ENCODE measurements at regions of chr18 and their contacts with region 1.

Region 1: GRCh38 chr18:47756364-47757016 is 174.0 kb downstream of the SMAD2 start:
- DNase-seq: peak; percentile 34 to 93
- H3K4me3 ChIP-seq: no peak overlapping the region
- H3K27ac ChIP-seq: no peak overlapping the region
- H3K4me1 ChIP-seq: no peaks in the 10 kb centered on the region
- H3K27me3 ChIP-seq: no peaks in the 10 kb centered on the region
- CTCF ChIP-seq: peak; percentile 93 to 96 (median 96)
- EP300 ChIP-seq: no peak
- POLR2A ChIP-seq: no peak
- RAD21 ChIP-seq: peak; percentile 89 to 95

Region 2: DNA sequence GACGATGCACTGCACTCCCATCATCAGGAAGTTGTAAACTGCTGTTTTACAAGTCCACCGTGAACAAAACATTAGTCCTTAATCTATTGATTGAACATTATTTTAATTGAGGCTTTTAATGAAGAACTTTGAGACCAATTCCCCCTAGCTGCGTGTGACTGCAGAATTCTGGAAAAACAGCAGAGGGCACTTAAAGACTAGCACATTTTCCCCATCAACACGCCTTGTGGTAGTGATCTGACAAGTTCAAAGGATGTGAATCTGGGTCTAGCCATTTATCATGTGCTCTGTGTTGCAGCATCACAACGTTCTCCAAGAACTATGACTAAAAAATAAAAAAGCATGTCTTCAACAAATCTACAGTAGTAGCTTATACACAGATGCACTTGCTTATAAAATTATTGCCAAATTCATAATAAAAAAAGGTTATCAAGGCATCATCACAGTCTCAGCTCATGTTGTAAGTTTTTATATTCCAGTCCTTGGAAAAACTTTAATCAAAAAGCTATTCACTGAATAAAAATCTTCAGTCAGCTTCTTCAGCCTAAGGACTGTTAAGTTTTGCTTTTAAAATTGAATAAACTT is 540.8 kb before region 1 on chr18:
- CTCF ChIA-PET with region 1: interaction called, 16 read pairs
- POLR2A ChIA-PET with region 1: no interaction called
- DNase-seq: no peak
- H3K4me3 ChIP-seq: no peak overlapping the region
- H3K27ac ChIP-seq: no peak overlapping the region
- H3K4me1 ChIP-seq: no peaks in the 10 kb centered on the region
- H3K27me3 ChIP-seq: peaks cover 0 to under 1% (median 0%) of the 10 kb centered on the region in 4 experiments; a peak in 2 of 7 replicates
- CTCF ChIP-seq: peak; percentile 12 to 92 (median 84)
- EP300 ChIP-seq: no peak
- POLR2A ChIP-seq: no peak
- RAD21 ChIP-seq: peak; percentile 97 to 98

Region 3: DNA sequence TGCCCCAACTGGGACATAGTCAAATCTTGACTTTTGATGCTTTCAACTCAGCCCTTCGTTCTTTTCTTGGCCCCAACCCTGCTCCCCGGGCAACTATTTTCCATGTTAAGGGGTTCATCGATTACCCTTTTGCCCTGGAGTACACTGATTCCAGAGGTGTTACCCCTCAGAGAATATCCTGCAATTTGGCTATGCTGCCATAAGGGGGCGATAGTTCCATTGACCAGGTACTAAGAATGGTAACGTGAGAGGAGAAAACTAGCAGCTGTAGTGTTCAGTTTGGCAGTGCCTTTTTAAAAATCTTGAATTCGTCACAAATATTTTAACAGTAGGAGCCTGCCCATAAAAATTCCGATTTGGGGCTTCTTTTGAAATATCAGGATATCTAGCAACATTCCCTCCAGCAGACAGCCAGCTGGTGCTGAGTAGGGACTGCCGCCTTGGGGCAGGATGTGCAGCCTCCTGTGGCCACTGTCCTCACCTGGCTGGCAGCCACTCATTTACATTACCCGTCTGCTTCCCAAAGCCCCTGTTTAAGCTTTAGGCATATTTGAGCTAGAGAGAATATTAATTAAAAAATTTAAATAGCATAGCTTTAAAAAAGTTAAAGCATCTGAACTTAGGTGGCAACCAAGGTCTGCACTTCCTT is 358.7 kb before region 1 on chr18:
- CTCF ChIA-PET with region 1: interaction called, 16 read pairs
- POLR2A ChIA-PET with region 1: no interaction called
- DNase-seq: peak in 1 of 2 experiments; percentile 84
- H3K4me3 ChIP-seq: no peak overlapping the region
- H3K27ac ChIP-seq: no peak overlapping the region
- H3K4me1 ChIP-seq: no peaks in the 10 kb centered on the region
- H3K27me3 ChIP-seq: no peaks in the 10 kb centered on the region; a peak in 1 of 7 replicates
- CTCF ChIP-seq: peak in 2 of 3 experiments; percentile 73 to 75; a peak in 3 of 4 replicates
- EP300 ChIP-seq: no peak
- POLR2A ChIP-seq: no peak
- RAD21 ChIP-seq: peak; percentile 65 to 77

Region 4: DNA sequence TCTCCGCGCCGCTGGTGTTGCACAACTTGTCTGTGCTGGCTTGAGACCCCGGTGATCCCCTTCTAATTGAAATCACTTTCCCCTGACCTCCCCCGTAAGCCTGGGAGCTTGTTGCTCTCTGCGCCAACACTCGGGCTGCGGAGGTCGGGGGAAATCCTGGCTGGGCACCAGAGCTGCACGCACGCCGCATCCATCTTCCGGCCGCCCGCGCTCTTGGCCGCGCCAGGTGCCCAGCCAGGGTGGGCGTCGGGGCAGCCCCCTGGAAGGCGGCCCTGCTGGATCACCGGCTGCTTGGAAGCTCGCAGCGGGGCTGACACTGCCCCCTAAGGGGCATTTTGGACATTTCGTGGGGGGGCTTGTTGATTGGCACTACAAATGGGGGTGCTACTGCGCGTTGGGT is 224.8 kb before region 1 on chr18:
- CTCF ChIA-PET with region 1: interaction called, 15 read pairs
- POLR2A ChIA-PET with region 1: no interaction called
- DNase-seq: peak in 1 of 2 experiments; percentile 61
- H3K4me3 ChIP-seq: no peak overlapping the region
- H3K27ac ChIP-seq: no peak overlapping the region
- H3K4me1 ChIP-seq: no peaks in the 10 kb centered on the region
- H3K27me3 ChIP-seq: no peaks in the 10 kb centered on the region
- CTCF ChIP-seq: peak; percentile 40 to 58 (median 49)
- EP300 ChIP-seq: no peak
- POLR2A ChIP-seq: no peak
- RAD21 ChIP-seq: peak; percentile 24 to 59; a peak in 3 of 4 replicates

Region 5: DNA sequence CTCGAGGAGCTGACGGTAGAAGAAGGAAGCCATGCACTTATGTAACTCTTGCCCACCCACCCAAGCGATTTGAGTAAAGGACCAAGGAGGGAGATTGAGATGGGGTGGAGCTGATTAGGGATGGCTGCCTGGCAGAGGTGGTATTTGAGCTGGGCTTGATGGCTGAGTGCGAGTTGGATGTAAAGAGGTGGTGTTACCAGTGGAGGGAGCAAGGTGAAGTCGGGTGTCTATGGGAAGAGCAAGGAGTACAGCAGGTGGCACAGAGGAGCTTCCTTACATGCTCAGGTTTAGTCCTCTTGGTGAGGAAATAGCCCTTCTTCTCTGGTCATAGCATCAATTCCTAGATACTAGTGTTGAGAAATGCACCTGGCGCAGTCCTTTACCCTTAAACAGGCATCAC is 210.9 kb before region 1 on chr18:
- CTCF ChIA-PET with region 1: interaction called, 17 read pairs
- POLR2A ChIA-PET with region 1: no interaction called
- DNase-seq: peak in 1 of 2 experiments; percentile 38
- H3K4me3 ChIP-seq: no peak overlapping the region
- H3K27ac ChIP-seq: no peak overlapping the region
- H3K4me1 ChIP-seq: no peaks in the 10 kb centered on the region
- H3K27me3 ChIP-seq: no peaks in the 10 kb centered on the region; a peak in 1 of 7 replicates
- CTCF ChIP-seq: peak; percentile 67 to 83 (median 72)
- EP300 ChIP-seq: no peak
- POLR2A ChIP-seq: no peak
- RAD21 ChIP-seq: peak; percentile 62 to 74

Region 6: GRCh38 chr18:47577520-47577919 is 179.0 kb before region 1 on chr18:
- CTCF ChIA-PET with region 1: interaction called, 12 read pairs
- POLR2A ChIA-PET with region 1: no interaction called
- DNase-seq: no peak
- H3K4me3 ChIP-seq: no peak overlapping the region
- H3K27ac ChIP-seq: no peak overlapping the region
- H3K4me1 ChIP-seq: peaks cover 3 to 9% (median 6%) of the 10 kb centered on the region in 4 experiments
- H3K27me3 ChIP-seq: no peaks in the 10 kb centered on the region; a peak in 1 of 7 replicates
- CTCF ChIP-seq: no peak
- EP300 ChIP-seq: no peak
- POLR2A ChIP-seq: no peak
- RAD21 ChIP-seq: no peak

Region 7: DNA sequence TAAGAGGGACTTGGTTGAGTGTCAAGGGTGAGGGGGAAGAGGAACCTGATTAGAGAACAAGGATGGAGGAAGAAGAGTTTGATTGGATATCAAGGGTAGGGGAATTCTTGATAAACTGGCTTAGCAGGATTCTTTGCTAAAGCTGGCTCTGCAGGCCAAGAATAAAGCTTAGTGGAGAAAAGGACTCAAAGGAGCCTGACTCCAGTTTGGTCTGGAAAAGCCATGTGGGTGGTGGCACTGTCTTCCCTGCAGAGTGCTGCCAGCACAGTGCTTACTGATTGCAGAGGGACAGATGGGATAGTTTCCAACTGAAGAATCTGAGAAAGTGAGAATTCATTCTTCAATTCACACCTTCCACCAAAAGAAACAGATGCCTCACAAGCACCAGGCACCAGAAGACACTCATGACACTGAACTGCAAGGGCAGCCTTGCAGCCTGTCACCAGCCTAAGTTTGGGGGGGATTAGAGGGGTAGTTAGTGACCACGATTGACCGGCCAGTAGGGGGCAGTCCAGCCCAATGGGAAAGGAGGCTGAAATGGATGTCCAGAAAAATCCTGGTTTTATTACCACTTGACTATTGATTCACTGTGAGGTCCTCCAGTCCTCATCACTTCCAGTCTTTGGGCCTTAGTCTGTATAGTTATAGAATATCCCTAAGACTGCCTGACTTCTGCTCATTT is 160.5 kb before region 1 on chr18:
- CTCF ChIA-PET with region 1: interaction called, 41 read pairs
- POLR2A ChIA-PET with region 1: no interaction called
- DNase-seq: peak in 1 of 2 experiments; percentile 86
- H3K4me3 ChIP-seq: no peak overlapping the region
- H3K27ac ChIP-seq: no peak overlapping the region
- H3K4me1 ChIP-seq: peaks cover 0 to 11% (median 2%) of the 10 kb centered on the region in 4 experiments; a peak in 5 of 7 replicates
- H3K27me3 ChIP-seq: no peaks in the 10 kb centered on the region
- CTCF ChIP-seq: peak; percentile 76 to 94 (median 83)
- EP300 ChIP-seq: no peak
- POLR2A ChIP-seq: no peak
- RAD21 ChIP-seq: peak; percentile 89 to 94